A673 (cell line): ENCODE measurements at regions of chr3 and their contacts with region 1.

Region 1: DNA sequence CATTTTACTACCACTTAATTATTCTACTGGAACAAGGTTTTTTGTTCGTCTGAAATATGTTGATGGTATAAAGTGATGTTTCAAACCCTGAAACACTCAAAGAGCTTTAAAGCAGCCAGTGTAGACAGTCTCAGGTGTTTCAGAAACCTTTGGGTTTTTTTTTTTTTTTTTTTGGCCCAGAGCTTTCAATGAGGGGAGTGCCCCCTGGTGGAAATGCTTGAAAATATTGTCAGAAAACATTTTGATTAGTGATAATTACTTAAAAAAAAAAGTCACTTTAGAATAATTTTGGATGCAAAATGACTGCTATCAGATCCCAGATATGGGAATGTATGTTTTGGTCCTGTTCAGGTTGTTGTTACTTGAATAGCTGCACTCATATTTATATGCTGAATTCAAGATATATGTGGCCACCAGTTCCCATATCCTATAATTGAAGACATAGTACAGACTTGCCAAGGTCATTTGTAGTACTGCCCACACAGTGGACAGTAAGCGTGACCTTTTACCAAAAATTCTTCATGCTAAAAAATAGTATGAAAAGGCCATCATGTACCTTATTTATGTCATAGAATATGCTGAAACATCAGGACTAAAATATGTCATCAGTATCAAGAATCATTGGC is 35.9 kb downstream of the SATB1 start:
- DNase-seq: peak; percentile 24
- H3K4me3 ChIP-seq: no peak overlapping the region
- H3K27ac ChIP-seq: no peak overlapping the region
- H3K4me1 ChIP-seq: no peaks in the 10 kb centered on the region
- H3K27me3 ChIP-seq: no peaks in the 10 kb centered on the region
- CTCF ChIP-seq: peak; percentile 68

Region 2: DNA sequence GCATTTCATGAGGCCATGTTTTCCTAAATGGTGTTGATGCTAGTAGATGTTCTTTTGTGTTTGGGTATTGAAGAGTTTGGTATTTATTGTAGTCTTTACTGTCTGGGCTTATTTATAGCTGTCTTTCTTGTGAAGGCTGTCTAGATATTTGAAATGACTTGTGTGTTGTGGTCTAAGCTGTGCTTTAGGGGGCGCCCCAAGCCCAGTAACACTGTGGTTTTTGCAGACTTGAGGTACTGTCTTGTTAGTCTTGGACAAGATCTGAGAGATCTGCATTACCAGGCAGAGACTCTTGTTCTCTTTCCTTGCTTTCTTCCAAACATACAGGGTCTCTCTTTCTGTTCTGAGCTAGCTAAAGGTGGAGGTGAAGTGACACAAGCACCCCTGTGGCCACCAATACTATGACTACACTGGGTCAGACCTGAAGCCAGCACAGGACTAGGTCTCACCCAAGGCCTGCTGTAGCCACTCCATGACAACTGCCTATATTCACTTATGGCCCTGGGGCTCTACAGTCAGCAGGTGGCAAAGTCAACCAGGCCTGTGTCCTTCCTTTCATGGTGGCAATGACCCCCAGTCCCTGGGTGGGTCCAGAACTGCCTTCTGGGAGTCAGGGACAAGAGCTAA is 494.7 kb before region 1 on chr3:
- CTCF ChIA-PET with region 1: interaction called, 4 read pairs
- POLR2A ChIA-PET with region 1: no interaction called
- intact Hi-C with region 1: loop called (anchors 1 kb)
- DNase-seq: peak; percentile 46
- H3K4me3 ChIP-seq: no peak overlapping the region
- H3K27ac ChIP-seq: no peak overlapping the region
- H3K4me1 ChIP-seq: no peaks in the 10 kb centered on the region
- H3K27me3 ChIP-seq: peaks cover 4% of the 10 kb centered on the region
- CTCF ChIP-seq: peak; percentile 61